Heart right ventricle (tissue), 16 donors: ENCODE measurements at regions of chrX and their contacts with region 1.

Region 1: DNA sequence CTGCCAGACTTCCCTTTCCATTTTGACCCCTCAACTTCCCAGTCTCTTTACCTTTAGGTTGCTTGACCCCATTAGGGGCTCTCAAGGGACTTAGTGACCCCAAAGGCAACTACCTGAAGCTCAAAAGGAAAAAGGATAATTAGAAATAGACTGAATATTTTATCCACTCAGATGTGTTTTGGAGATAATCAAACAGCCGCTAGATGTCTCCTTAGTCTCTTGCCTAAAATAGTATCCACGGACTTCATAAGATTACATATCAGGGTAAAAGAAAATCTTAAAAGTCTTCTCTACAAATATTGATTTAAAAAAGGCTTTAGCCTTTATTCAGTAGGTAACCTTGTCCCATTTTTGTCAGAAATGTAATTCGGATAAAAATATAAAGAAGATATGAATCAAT is 21.0 kb upstream of the RHOXF2 start:
- DNase-seq: no peak
- ATAC-seq: no peak
- H3K4me3 ChIP-seq: no peak overlapping the region
- H3K27ac ChIP-seq: no peak overlapping the region
- H3K4me1 ChIP-seq: no peaks in the 10 kb centered on the region
- H3K27me3 ChIP-seq: peaks cover 0 to 9% (median 0%) of the 10 kb centered on the region in 7 donors
- CTCF ChIP-seq: no peak

Region 2: DNA sequence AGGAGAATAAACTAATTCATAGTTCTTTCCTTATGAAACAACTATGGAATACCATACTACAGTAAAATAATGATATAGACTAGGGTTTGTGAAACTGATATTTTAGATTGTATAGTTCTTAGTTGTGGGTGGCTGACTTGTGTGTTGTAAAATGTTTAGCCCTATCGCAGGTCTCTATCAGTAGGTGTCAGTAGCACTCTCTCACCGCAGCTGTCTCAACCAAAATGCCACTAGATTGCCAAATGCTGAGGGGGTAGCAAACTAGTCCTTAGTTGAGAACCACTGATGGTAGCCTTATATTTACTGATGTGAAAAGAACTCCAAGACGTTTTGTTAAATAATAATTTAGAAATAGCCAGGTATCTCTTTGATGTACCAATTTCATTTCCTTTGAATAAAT is 108.1 kb before region 1 on chrX:
- intact Hi-C with region 1: loop called in 1 of 10 experiments (anchors 10 kb)
- DNase-seq: no peak
- ATAC-seq: no peak
- H3K4me3 ChIP-seq: no peak overlapping the region
- H3K27ac ChIP-seq: no peak overlapping the region
- H3K4me1 ChIP-seq: no peaks in the 10 kb centered on the region
- H3K27me3 ChIP-seq: peaks cover 0 to 33% (median 0%) of the 10 kb centered on the region in 7 donors
- CTCF ChIP-seq: no peak